Aorta (tissue), 5 donors: ENCODE measurements at regions of chr16 and their contacts with region 1.

Region 1: GRCh38 chr16:11742539-11743307 is at the start of gene TXNDC11:
- DNase-seq: peak; percentile 99 to 100
- ATAC-seq: peak; percentile 100
- H3K4me3 ChIP-seq: peak within 1 kb of the TSS; percentile 36 to 97
- H3K27ac ChIP-seq: peak within 1 kb of the TSS; percentile 76 to 93
- H3K4me1 ChIP-seq: no peaks in the 10 kb centered on the region
- H3K27me3 ChIP-seq: no peaks in the 10 kb centered on the region
- total RNA-seq, gene TXNDC11: 39.7 to 43.6 TPM

Region 2: DNA sequence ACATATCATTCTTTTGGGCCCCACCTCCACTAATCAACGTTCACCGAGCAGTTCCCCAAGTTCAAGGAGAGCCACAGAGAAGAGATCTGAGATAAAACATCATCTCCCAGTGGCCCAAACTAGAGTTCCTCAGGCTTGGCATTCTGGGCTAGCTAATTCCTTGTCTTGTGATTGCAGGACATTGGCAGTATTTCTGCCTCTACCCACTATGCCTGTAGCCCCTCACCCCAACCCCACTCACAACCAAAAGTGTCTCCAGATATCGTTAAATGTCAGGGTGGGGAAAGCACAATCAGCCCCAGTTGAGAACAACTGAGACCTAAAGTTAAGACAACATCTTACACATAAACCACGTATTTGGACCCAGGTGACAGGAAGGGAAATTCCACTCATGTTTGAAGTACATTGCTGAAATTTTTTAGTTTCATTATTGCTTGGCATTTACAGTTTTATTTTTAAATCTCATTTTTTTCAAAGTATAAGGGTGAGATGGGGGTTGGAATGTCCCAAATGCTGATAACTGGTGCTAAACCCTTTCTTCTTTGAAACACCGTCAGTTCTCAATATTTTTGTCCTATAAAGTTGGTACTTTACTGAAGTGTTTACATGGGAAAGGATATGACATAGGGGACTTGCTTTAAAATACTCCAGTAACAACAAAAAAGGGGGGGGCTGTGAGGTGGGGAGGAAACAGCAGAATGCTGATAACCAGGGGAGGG is 40.8 kb after region 1 on chr16:
- intact Hi-C with region 1: loop called in 1 of 2 experiments (anchors 5 kb)
- DNase-seq: no peak
- ATAC-seq: peak; percentile 49
- H3K4me3 ChIP-seq: peak overlapping the region; percentile 33 to 36
- H3K27ac ChIP-seq: peak overlapping the region; percentile 62 to 83
- H3K4me1 ChIP-seq: peaks cover 0 to 2% of the 10 kb centered on the region in 2 donors
- H3K27me3 ChIP-seq: no peaks in the 10 kb centered on the region

Region 3: GRCh38 chr16:11797166-11797956 is 54.6 kb after region 1 on chr16 and contains the start of gene ZC3H7A:
- intact Hi-C with region 1: loop called in 1 of 2 experiments (anchors 2 kb)
- DNase-seq: peak; percentile 99
- ATAC-seq: peak; percentile 98
- H3K4me3 ChIP-seq: peak within 1 kb of the TSS; percentile 94 to 98
- H3K27ac ChIP-seq: peak within 1 kb of the TSS; percentile 91 to 95
- H3K4me1 ChIP-seq: no peaks in the 10 kb centered on the region
- H3K27me3 ChIP-seq: no peaks in the 10 kb centered on the region
- total RNA-seq, gene ZC3H7A: 69.7 to 86.2 TPM